Activated B cell treated with CpG ODN at 0.5 μM for 24 hours (primary cell): ENCODE measurements at regions of chr2 and their contacts with region 1.

Region 1: GRCh38 chr2:10122386-10123280 is at the start of gene RRM2:
- DNase-seq: peak; percentile 77
- ATAC-seq: peak; percentile 82
- H3K4me3 Mint-ChIP-seq: peak within 1 kb of the TSS; percentile 97
- H3K27ac Mint-ChIP-seq: peak within 1 kb of the TSS; percentile 12
- H3K4me1 Mint-ChIP-seq: peaks cover 35% of the 10 kb centered on the region
- H3K27me3 Mint-ChIP-seq: peaks cover 8% of the 10 kb centered on the region
- CTCF ChIP-seq: no peak
- total RNA-seq, gene RRM2: 8.6 and 9.3 TPM in 2 replicates

Region 2: DNA sequence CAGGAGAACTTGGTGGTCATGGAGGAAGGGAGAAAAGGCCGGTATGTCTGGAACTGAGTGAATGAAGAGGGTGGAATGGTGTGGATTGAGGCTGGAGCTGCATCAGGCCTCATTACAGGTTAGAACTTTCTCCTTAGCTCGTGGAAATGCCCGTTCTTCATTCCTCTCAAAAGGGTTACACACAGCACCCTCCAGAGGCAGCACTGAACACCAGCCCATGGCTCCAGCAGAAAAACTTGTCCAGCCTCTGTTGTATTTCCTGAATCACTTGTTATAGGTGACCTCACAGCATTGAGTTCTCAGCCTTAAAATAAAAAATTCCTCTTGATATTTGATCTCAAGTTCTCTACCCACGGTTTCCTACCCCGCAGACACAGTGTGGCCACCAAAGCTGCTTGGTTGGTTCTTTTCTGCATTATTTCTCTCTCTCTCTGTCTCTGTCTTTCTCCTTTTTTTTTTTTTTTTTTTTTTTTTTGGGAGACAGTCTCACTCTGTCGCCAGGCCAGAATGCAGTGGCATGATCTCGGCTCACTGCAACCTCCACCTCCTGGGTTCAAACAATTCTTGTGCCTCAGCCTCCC is 789.0 kb before region 1 on chr2:
- CTCF ChIA-PET with region 1: no interaction called
- POLR2A ChIA-PET with region 1: no interaction called
- intact Hi-C with region 1: no loop called
- DNase-seq: no peak
- ATAC-seq: no peak
- H3K4me3 Mint-ChIP-seq: no peak overlapping the region
- H3K27ac Mint-ChIP-seq: no peak overlapping the region
- H3K4me1 Mint-ChIP-seq: peaks cover 19% of the 10 kb centered on the region
- H3K27me3 Mint-ChIP-seq: no peaks in the 10 kb centered on the region
- CTCF ChIP-seq: no peak

Region 3: DNA sequence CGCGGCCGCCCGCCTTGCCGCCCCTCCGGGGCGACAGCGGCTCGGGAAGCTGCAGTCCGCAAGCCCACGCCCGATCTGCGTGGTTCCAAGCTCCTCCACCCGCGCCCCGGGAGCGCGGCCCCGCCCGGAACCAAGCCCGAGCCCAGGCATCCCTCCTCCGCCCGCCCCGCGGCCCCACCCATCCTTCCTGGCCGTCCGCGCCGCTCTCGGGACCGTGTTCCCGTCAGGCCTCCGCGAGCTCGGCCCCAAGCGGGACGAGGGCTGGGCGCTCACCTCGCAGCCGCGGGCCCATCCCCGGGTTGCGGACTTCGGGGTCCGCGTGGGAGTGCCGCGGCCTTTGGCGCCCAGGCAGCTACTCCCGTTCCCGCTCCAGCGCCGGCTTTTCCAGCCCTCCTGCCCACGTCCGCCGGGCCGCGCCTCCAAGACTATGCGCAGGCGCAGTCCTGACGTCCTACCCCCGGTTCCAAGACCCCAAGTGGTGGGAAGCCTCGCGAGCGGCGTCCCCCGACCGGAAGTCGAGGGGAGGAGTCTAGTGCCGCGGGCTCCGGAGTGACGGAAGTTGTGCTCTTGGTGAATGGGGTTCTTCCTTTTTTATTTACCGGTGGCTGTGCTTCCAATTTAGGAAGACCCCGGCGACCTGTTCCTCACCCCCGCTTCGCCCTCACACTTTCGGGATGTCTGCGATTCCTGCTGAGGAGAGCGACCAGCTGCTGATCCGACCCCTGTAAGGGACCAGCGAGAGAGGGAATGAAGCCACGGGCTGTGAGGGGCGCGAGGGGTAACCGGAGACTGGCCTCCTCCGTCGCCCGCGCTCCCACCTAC is 699.3 kb before region 1 on chr2 and contains the starts of genes CPSF3 and ITGB1BP1:
- CTCF ChIA-PET with region 1: no interaction called
- POLR2A ChIA-PET with region 1: no interaction called
- intact Hi-C with region 1: loop called (anchors 10 kb)
- DNase-seq: peak; percentile 96
- ATAC-seq: peak; percentile 86
- H3K4me3 Mint-ChIP-seq: no peak within 1 kb of the TSS
- H3K27ac Mint-ChIP-seq: peak within 1 kb of the TSS; percentile 91
- H3K4me1 Mint-ChIP-seq: peaks cover 22% of the 10 kb centered on the region
- H3K27me3 Mint-ChIP-seq: no peaks in the 10 kb centered on the region
- CTCF ChIP-seq: no peak
- total RNA-seq, gene CPSF3: 44.0 and 44.6 TPM in 2 replicates
- total RNA-seq, gene ITGB1BP1: 39.6 and 40.5 TPM in 2 replicates

Region 4: DNA sequence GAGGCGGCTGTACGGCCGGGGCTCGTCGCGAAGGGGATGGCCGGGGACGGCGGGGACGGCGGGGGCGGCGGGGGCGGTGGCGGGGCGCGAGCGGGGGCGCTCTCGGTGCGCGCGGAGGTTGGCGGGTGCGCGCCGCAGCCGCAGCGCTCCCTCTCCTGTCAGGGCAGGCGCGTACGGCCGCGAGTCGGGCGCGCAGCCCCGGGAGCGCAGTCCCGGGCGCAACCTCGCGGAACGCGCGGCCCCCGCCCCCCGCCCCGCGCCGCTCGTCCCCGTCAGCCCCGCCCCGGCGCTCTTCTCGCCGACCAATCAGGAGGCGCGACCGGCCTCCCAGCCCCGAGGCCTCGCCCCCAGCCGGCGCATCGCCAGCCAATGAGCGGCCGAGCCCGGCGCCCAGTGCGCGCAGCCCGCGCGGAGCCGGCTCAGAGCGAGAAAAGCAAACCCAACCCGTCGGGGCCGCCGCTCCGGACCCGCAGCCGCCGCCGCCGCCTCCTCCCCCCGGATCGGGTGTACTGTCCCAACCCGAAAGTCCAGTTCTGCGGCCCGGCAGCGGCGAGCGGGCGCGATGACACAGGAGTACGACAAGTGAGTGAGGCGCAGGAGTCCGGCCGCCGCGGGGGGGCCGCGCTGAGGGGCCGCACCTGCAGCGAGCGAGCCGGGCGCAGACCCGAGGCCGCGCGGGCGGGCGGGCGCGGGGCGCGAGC is 171.2 kb before region 1 on chr2 and contains the start of gene GRHL1:
- CTCF ChIA-PET with region 1: no interaction called
- POLR2A ChIA-PET with region 1: no interaction called
- intact Hi-C with region 1: loop called (anchors 1 kb)
- DNase-seq: peak; percentile 89
- ATAC-seq: peak; percentile 96
- H3K4me3 Mint-ChIP-seq: peak within 1 kb of the TSS; percentile 84
- H3K27ac Mint-ChIP-seq: peak within 1 kb of the TSS; percentile 65
- H3K4me1 Mint-ChIP-seq: peaks cover 14% of the 10 kb centered on the region
- H3K27me3 Mint-ChIP-seq: peaks cover 37% of the 10 kb centered on the region
- CTCF ChIP-seq: no peak
- total RNA-seq, gene GRHL1: 0.39 and 0.95 TPM in 2 replicates

Region 5: GRCh38 chr2:10079234-10079869 is 43.3 kb before region 1 on chr2:
- CTCF ChIA-PET with region 1: no interaction called
- POLR2A ChIA-PET with region 1: interaction called, 3 read pairs
- intact Hi-C with region 1: loop called (anchors 1 kb)
- DNase-seq: peak; percentile 30
- ATAC-seq: peak; percentile 51
- H3K4me3 Mint-ChIP-seq: peak overlapping the region; percentile 81
- H3K27ac Mint-ChIP-seq: no peak overlapping the region
- H3K4me1 Mint-ChIP-seq: peaks cover 12% of the 10 kb centered on the region
- H3K27me3 Mint-ChIP-seq: peaks cover 67% of the 10 kb centered on the region
- CTCF ChIP-seq: no peak

Region 6: GRCh38 chr2:10668402-10669012 is 545.9 kb after region 1 on chr2:
- CTCF ChIA-PET with region 1: no interaction called
- POLR2A ChIA-PET with region 1: no interaction called
- intact Hi-C with region 1: loop called (anchors 1 kb)
- DNase-seq: no peak
- ATAC-seq: peak; percentile 58
- H3K4me3 Mint-ChIP-seq: no peak overlapping the region
- H3K27ac Mint-ChIP-seq: no peak overlapping the region
- H3K4me1 Mint-ChIP-seq: no peaks in the 10 kb centered on the region
- H3K27me3 Mint-ChIP-seq: no peaks in the 10 kb centered on the region
- CTCF ChIP-seq: no peak